ENCODE measurements at regions of chr19 and their contacts with region 1.

Region 1: DNA sequence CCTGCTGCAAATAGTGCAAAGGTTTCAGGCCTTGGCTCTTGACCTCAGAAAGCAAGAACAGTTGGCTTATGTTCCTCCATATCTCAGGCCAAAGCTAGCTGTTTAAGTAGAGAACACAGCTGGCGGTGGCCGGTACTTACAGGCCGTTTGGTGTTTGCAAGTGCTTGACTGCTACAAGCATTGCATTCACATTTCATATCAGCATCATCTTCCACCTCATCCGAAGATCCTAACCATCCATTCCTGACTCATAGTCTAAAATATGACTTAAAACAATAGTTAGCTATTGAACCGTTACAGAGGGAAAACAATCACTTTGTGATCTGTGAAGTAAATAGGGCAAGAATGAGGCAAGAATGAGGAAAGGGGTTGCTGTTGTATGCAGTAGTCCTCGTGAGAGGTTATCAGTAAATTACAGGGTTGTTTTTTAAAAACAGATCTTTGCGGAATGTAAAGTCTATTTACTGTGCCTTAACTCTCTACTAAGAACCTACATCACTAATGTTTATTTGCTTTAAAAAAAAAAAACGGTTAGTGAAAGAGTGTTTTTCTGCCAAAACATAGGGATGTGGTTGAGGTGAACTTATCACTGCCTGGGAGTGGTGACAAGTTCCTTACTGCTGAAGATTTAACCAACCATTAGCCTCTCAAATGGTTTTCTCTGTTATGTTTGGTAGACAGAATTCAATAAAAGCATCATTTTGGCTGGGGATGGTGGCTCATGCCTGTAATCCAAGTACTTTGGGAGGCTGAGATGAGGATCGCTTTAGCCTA is 21.6 kb upstream of the WDR88 start:
- DNase-seq: no peak
- H3K4me3 ChIP-seq: no peak overlapping the region
- H3K27ac ChIP-seq: no peak overlapping the region
- H3K4me1 ChIP-seq: no peaks in the 10 kb centered on the region
- H3K27me3 ChIP-seq: no peaks in the 10 kb centered on the region
- CTCF ChIP-seq: no peak
- POLR2A ChIP-seq: no peak

Region 2: GRCh38 chr19:32971715-32972540 is 138.4 kb before region 1 on chr19 and contains the starts of genes CEP89 and FAAP24:
- intact Hi-C with region 1: loop called (anchors 10 kb)
- DNase-seq: peak; percentile 92
- H3K4me3 ChIP-seq: peak within 1 kb of the TSS; percentile 54 to 90 (median 83)
- H3K27ac ChIP-seq: peak within 1 kb of the TSS; percentile 76 to 90 (median 82)
- H3K4me1 ChIP-seq: peaks cover 6 to 30% (median 11%) of the 10 kb centered on the region in 3 donors
- H3K27me3 ChIP-seq: no peaks in the 10 kb centered on the region
- CTCF ChIP-seq: no peak
- POLR2A ChIP-seq: peak in 1 of 4 donors; percentile 42
- total RNA-seq, gene CEP89: 4.6 to 10.5 (median 8.7) TPM
- total RNA-seq, gene FAAP24: 0.91 to 3.9 (median 2.1) TPM

Region 3: GRCh38 chr19:33125929-33126388 is 15.6 kb after region 1 on chr19:
- intact Hi-C with region 1: no loop called
- DNase-seq: no peak
- H3K4me3 ChIP-seq: no peak overlapping the region
- H3K27ac ChIP-seq: no peak overlapping the region
- H3K4me1 ChIP-seq: peaks cover 0 to 4% (median 0%) of the 10 kb centered on the region in 3 donors
- H3K27me3 ChIP-seq: no peaks in the 10 kb centered on the region
- CTCF ChIP-seq: peak; percentile 36 to 88 (median 76)
- POLR2A ChIP-seq: no peak

Region 4: GRCh38 chr19:33273881-33274682 is 163.8 kb after region 1 on chr19:
- intact Hi-C with region 1: no loop called
- DNase-seq: no peak
- H3K4me3 ChIP-seq: no peak overlapping the region
- H3K27ac ChIP-seq: peak overlapping the region; percentile 47 to 71 (median 58)
- H3K4me1 ChIP-seq: peaks cover 20 to 42% (median 22%) of the 10 kb centered on the region in 3 donors
- H3K27me3 ChIP-seq: no peaks in the 10 kb centered on the region
- CTCF ChIP-seq: no peak
- POLR2A ChIP-seq: no peak